Naive thymus-derived CD4-positive, alpha-beta T cell (primary cell): ENCODE measurements at regions of chr12 and their contacts with region 1.

Region 1: GRCh38 chr12:6607751-6608591 is 792 bp upstream of the CHD4 start:
- DNase-seq: peak in 8 of 9 donors; percentile 56 to 81 (median 71)
- ATAC-seq: peak; percentile 49
- H3K4me3 ChIP-seq: no peak overlapping the region
- H3K4me3 Mint-ChIP-seq: no peak overlapping the region
- H3K27ac ChIP-seq: peak overlapping the region; percentile 96
- H3K27ac Mint-ChIP-seq: no peak overlapping the region
- H3K4me1 ChIP-seq: peaks cover 46 to 47% of the 10 kb centered on the region in 2 donors
- H3K4me1 Mint-ChIP-seq: peaks cover 48 to 55% (median 51%) of the 10 kb centered on the region in 7 donors
- H3K27me3 ChIP-seq: no peaks in the 10 kb centered on the region
- H3K27me3 Mint-ChIP-seq: no peaks in the 10 kb centered on the region

Region 2: DNA sequence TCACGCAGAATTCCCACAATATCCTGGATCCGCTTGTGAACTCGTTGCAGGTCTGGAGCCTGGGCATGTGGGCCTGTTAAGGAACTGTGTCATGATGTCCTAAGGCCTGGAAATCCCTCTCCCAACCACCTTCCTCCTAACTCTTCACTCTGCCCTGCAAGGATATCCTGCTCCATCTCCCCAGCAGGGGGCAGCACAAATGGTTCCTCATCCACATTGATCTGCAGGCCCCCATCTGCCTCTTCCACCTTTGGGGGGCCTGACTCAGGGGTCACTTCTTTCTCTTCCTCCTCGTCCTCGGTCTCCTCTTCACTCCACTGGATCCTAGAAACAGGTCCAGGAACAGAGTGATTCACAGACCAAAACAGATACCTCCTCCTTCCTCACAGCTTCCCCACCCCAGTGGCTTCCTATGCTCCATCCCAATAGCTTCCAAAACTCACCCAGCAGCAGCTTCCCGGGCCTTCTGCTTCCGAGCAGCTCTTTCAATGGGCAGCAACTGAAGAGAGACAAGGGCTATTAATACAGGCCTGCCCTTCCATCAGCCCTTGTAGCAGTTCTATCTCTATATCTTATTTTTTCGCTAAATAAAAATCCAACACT is 44.4 kb before region 1 on chr12:
- CTCF ChIA-PET with region 1: interaction called, 4 read pairs
- POLR2A ChIA-PET with region 1: interaction called, 11 read pairs
- intact Hi-C with region 1: loop called in 1 of 2 experiments (anchors 1 kb)
- DNase-seq: peak; percentile 36 to 68 (median 52)
- ATAC-seq: peak; percentile 43
- H3K4me3 ChIP-seq: no peak overlapping the region
- H3K4me3 Mint-ChIP-seq: peak overlapping the region in 2 of 10 donors; percentile 6 to 55
- H3K27ac ChIP-seq: no peak overlapping the region
- H3K27ac Mint-ChIP-seq: peak overlapping the region in 7 of 9 donors; percentile 9 to 86 (median 78)
- H3K4me1 ChIP-seq: peaks cover 8 to 14% of the 10 kb centered on the region in 2 donors
- H3K4me1 Mint-ChIP-seq: peaks cover 22 to 54% (median 41%) of the 10 kb centered on the region in 7 donors
- H3K27me3 ChIP-seq: no peaks in the 10 kb centered on the region
- H3K27me3 Mint-ChIP-seq: no peaks in the 10 kb centered on the region

Region 3: GRCh38 chr12:6570264-6570887 is 37.6 kb before region 1 on chr12:
- CTCF ChIA-PET with region 1: interaction called, 4 read pairs
- POLR2A ChIA-PET with region 1: interaction called, 11 read pairs
- intact Hi-C with region 1: loop called (anchors 1 kb)
- DNase-seq: peak in 1 of 9 donors; percentile 51
- ATAC-seq: no peak
- H3K4me3 ChIP-seq: no peak overlapping the region
- H3K4me3 Mint-ChIP-seq: peak overlapping the region in 7 of 10 donors; percentile 36 to 100 (median 94)
- H3K27ac ChIP-seq: no peak overlapping the region
- H3K27ac Mint-ChIP-seq: peak overlapping the region; percentile 47 to 99 (median 86)
- H3K4me1 ChIP-seq: peaks cover 8 to 18% of the 10 kb centered on the region in 2 donors
- H3K4me1 Mint-ChIP-seq: peaks cover 17 to 49% (median 44%) of the 10 kb centered on the region in 7 donors
- H3K27me3 ChIP-seq: no peaks in the 10 kb centered on the region
- H3K27me3 Mint-ChIP-seq: no peaks in the 10 kb centered on the region

Region 4: GRCh38 chr12:6620137-6620884 is 12.3 kb after region 1 on chr12:
- CTCF ChIA-PET with region 1: interaction called, 7 read pairs
- POLR2A ChIA-PET with region 1: interaction called, 7 read pairs
- intact Hi-C with region 1: loop called in 1 of 2 experiments (anchors 2 kb)
- DNase-seq: peak in 7 of 9 donors; percentile 49 to 63 (median 60)
- ATAC-seq: peak; percentile 88
- H3K4me3 ChIP-seq: no peak overlapping the region
- H3K4me3 Mint-ChIP-seq: peak overlapping the region in 8 of 10 donors; percentile 40 to 83 (median 68)
- H3K27ac ChIP-seq: peak overlapping the region; percentile 46
- H3K27ac Mint-ChIP-seq: peak overlapping the region in 6 of 9 donors; percentile 45 to 88 (median 84)
- H3K4me1 ChIP-seq: peaks cover 0 to 5% of the 10 kb centered on the region in 2 donors
- H3K4me1 Mint-ChIP-seq: peaks cover 0 to 42% (median 26%) of the 10 kb centered on the region in 7 donors
- H3K27me3 ChIP-seq: no peaks in the 10 kb centered on the region
- H3K27me3 Mint-ChIP-seq: no peaks in the 10 kb centered on the region

Region 5: DNA sequence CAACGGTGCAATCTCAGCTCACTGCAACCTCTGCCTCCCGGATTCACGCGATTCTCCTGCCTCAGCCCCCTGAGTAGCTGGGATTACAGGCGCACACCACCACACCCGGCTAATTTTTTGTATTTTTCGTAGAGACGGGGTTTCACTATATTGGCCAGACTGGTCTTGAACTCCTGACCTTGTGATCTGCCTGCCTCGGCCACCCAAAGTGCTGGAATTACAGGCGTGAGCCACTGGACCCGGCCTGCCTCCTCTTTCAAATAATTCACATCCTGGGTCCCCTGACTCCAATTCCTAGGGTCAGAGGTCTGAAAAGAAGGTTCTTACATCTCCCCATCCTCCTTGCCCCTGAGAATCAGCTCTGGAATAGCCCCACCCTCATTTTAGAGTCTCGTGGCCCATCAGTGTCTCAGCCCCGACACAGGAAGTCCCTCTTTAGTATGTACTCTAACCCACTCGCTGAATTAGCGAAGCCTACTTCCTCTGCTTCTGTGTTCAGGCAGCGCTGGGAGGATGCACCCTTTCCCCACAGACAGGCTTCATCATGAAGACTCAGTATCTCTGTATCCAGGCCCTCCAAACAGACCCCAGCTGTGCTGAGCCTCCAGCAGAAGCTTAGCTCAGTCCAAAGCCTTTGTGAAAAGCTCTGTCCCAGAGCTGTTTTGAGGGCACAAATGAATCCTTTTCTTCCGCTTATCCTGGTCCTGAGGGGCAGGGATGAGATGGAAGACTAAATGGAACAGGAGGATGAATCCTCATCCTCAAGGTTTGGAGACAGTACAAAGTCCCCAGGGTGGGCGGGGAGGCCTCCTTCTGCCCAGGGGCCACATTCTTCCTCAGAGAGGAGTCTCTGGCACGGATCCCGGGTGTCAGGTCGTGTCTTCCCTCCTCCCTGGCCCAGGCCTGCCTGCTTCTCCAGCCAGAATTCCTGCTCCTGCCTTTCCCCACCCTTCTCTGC is 24.3 kb after region 1 on chr12:
- CTCF ChIA-PET with region 1: interaction called, 3 read pairs
- POLR2A ChIA-PET with region 1: interaction called, 33 read pairs
- intact Hi-C with region 1: loop called in 1 of 2 experiments (anchors 1 kb)
- DNase-seq: peak in 8 of 9 donors; percentile 43 to 75 (median 66)
- ATAC-seq: peak; percentile 81
- H3K4me3 ChIP-seq: peak overlapping the region; percentile 56
- H3K4me3 Mint-ChIP-seq: peak overlapping the region; percentile 80 to 94 (median 88)
- H3K27ac ChIP-seq: peak overlapping the region; percentile 81
- H3K27ac Mint-ChIP-seq: peak overlapping the region; percentile 94 to 99 (median 97)
- H3K4me1 ChIP-seq: peaks cover 26 to 40% of the 10 kb centered on the region in 2 donors
- H3K4me1 Mint-ChIP-seq: peaks cover 46 to 68% (median 58%) of the 10 kb centered on the region in 7 donors
- H3K27me3 ChIP-seq: no peaks in the 10 kb centered on the region
- H3K27me3 Mint-ChIP-seq: no peaks in the 10 kb centered on the region

Region 6: GRCh38 chr12:6953442-6954315 is 345.7 kb after region 1 on chr12:
- CTCF ChIA-PET with region 1: no interaction called
- POLR2A ChIA-PET with region 1: no interaction called
- intact Hi-C with region 1: loop called in 1 of 2 experiments (anchors 10 kb)
- DNase-seq: peak in 8 of 9 donors; percentile 65 to 92 (median 74)
- ATAC-seq: peak; percentile 56
- H3K4me3 ChIP-seq: peak overlapping the region; percentile 92
- H3K4me3 Mint-ChIP-seq: peak overlapping the region; percentile 93 to 100 (median 98)
- H3K27ac ChIP-seq: peak overlapping the region; percentile 95
- H3K27ac Mint-ChIP-seq: peak overlapping the region; percentile 83 to 100 (median 97)
- H3K4me1 ChIP-seq: peaks cover 70 to 84% of the 10 kb centered on the region in 2 donors
- H3K4me1 Mint-ChIP-seq: peaks cover 54 to 85% (median 72%) of the 10 kb centered on the region in 7 donors
- H3K27me3 ChIP-seq: no peaks in the 10 kb centered on the region
- H3K27me3 Mint-ChIP-seq: no peaks in the 10 kb centered on the region